ENCODE measurements at regions of chr11 and their contacts with region 1.

Region 1: GRCh38 chr11:34449013-34449412 is 10.3 kb downstream of the CAT start:
- DNase-seq: no peak
- H3K4me3 ChIP-seq: no peak overlapping the region
- H3K27ac ChIP-seq: no peak overlapping the region
- H3K4me1 ChIP-seq: no peaks in the 10 kb centered on the region
- H3K27me3 ChIP-seq: no peaks in the 10 kb centered on the region
- CTCF ChIP-seq: no peak

Region 2: DNA sequence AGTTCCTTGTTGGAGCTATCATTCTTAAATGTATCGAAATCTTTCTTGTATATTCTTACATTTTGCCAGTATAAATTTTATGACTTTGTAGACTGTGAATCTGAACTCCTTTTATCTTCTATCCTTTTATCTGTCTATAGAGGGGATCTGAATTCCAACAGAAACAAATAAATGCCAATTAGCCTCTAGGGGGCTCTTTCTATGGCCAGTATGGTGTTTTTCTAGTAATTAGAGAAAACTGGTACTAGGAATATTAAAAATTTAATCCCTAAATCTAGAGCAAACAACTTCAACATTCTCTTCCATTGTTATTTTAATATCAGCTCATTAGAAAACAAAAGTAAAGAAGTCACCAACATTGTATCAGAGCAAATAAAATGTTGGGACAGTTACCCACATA is 31.8 kb before region 1 on chr11:
- intact Hi-C with region 1: no loop called
- DNase-seq: no peak
- H3K4me3 ChIP-seq: no peak overlapping the region
- H3K27ac ChIP-seq: no peak overlapping the region
- H3K4me1 ChIP-seq: no peaks in the 10 kb centered on the region
- H3K27me3 ChIP-seq: no peaks in the 10 kb centered on the region
- CTCF ChIP-seq: no peak

Region 3: GRCh38 chr11:34977089-34977906 is 528.3 kb after region 1 on chr11:
- intact Hi-C with region 1: no loop called
- DNase-seq: no peak
- H3K4me3 ChIP-seq: no peak overlapping the region
- H3K27ac ChIP-seq: no peak overlapping the region
- H3K4me1 ChIP-seq: no peaks in the 10 kb centered on the region
- H3K27me3 ChIP-seq: no peaks in the 10 kb centered on the region
- CTCF ChIP-seq: no peak

Region 4: DNA sequence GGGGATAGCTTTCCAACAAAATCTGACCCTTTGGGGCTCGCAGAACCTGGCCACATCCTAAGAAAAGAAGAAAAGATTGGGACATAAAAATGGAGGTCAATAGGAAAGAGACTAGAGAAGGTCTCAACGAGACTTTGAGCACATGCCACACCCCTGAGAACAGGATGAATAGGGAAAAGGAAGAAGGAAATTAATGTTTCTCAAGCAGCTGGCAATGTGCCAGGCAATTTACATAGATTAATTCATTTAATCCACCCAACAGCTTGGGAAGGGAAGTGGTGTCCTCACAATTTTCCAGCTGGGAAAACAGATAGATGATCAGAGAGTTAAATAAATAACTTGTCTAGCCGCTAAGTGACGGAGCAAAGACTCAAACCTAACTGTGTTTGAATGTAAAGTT is 1025.7 kb after region 1 on chr11:
- intact Hi-C with region 1: loop called (anchors 5 kb)
- DNase-seq: no peak
- H3K4me3 ChIP-seq: no peak overlapping the region
- H3K27ac ChIP-seq: no peak overlapping the region
- H3K4me1 ChIP-seq: peaks cover 0 to 4% (median 0%) of the 10 kb centered on the region in 4 donors
- H3K27me3 ChIP-seq: peaks cover 0 to 12% of the 10 kb centered on the region in 2 donors
- CTCF ChIP-seq: no peak

Measured in tibial artery (tissue), 4 donors.